ENCODE measurements at regions of chr16 and their contacts with region 1.

Region 1: DNA sequence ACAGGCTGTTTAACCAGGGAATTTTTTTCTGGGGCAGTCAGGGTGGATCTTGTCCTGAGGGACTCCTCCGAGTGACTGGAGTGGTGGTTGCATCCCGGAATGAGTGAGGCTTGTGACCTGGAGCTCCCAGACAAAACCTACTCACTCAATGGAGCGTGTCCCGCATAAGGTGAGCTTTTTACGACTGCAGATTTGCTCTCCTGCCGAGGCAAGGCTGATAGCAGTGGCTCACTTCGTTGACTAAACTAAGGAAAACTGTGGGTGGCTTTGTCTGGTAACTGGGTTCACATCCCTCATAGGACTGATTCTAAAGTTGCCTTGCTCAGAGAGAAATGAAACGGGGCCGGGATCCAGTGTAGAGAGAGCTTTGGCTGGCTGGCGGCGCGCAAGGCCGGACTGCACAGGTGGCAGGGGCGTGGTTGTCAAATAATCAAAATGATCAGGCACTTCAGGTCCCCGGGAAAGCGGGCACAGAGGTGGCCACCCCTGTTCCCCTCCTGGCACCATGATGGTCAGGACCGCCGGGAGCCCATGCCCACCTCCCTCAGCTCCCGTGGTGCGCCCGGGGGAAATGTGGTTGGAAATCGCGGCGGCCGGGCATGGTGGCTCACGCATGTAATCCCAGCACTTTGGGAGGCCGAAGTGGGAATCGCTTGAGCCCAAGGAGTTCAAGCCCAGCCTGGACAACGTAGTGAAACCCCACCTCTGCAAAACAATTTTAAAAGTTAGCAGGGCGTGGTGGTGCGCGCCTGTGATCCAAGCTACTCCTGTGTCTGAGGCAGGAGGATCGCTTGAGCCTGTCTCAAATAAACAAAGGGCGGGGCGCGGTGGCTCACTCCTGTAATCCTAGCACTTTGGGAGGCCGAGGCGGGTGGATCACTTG is 26.5 kb downstream of the ZNF213 start:
- DNase-seq: no peak
- H3K4me3 ChIP-seq: no peak overlapping the region
- H3K27ac ChIP-seq: no peak overlapping the region
- H3K27me3 ChIP-seq: peaks cover 0 to 58% (median 10%) of the 10 kb centered on the region in 45 donors
- CTCF ChIP-seq: no peak

Region 2: GRCh38 chr16:3059000-3059722 is 102.2 kb before region 1 on chr16:
- intact Hi-C with region 1: loop called (anchors 5 to 10 kb)
- DNase-seq: peak; percentile 46 to 90 (median 68)
- H3K4me3 ChIP-seq: peak overlapping the region; percentile 57 to 95 (median 87)
- H3K27ac ChIP-seq: peak overlapping the region in 50 of 59 donors; percentile 7 to 90 (median 67)
- H3K27me3 ChIP-seq: no peaks in the 10 kb centered on the region
- CTCF ChIP-seq: peak; percentile 56 to 98 (median 90)

Region 3: DNA sequence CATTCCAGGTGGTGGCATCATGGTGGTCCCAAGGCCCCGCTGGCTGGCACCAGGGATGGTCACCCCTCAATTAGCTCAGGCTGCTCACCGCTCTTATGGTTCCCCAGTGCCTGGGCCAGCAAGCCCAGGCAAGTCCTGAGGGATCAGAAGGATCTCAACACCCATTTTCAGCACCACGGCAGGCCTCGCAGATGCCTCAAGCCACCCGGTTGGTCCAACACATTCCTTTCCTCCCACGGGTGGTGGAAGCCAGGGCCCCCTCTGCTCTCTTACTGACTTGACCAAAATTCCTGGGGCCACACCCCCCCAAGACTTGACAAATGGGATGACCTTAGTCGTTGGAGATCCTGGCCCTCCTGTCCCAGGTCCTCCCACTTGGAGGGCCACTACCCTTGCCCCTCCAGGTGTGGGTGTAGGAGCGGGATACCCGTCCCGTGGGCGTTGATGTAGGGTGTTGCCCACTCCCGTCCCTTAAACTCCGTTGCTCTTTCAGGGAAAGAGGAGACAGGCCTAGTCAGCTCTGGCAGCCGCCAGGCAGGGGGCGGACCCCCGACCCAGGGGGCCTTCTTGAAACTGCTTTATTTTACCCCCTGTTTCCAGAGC is 43.1 kb before region 1 on chr16:
- intact Hi-C with region 1: no loop called
- DNase-seq: no peak
- H3K4me3 ChIP-seq: no peak overlapping the region
- H3K27ac ChIP-seq: no peak overlapping the region
- H3K27me3 ChIP-seq: no peaks in the 10 kb centered on the region
- CTCF ChIP-seq: no peak

Region 4: GRCh38 chr16:3129137-3130131 is 31.9 kb before region 1 on chr16:
- intact Hi-C with region 1: loop called in 1 of 2 experiments (anchors 5 kb)
- DNase-seq: peak in 9 of 10 donors; percentile 66 to 81 (median 76)
- H3K4me3 ChIP-seq: peak overlapping the region; percentile 23 to 78 (median 60)
- H3K27ac ChIP-seq: peak overlapping the region; percentile 22 to 99 (median 84)
- H3K27me3 ChIP-seq: no peaks in the 10 kb centered on the region
- CTCF ChIP-seq: peak; percentile 69 to 96 (median 91)

Region 5: DNA sequence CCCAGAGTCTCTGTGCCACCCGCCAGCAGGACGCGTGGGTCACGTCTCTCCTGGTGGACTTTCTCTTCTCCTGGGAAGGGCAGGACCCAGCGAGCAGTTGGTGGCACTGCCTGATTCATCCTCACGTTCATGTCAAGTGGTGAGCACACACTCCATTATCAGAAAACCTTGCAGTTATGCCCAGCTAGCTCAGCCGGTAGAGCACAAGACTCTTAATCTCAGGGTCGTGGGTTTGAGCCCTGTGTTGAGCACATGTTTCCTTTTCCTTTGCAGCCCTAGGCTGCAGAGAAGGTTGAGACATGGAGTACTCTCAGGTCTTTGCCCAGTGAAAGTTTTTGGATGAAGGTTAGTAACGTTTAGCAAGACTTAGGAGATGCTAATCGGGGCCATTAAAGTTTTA is 34.6 kb after region 1 on chr16:
- intact Hi-C with region 1: loop called in 1 of 2 experiments (anchors 2 kb)
- DNase-seq: no peak
- H3K4me3 ChIP-seq: no peak overlapping the region
- H3K27ac ChIP-seq: no peak overlapping the region
- H3K27me3 ChIP-seq: peaks cover 0 to 84% (median 62%) of the 10 kb centered on the region in 45 donors
- CTCF ChIP-seq: no peak